Sigmoid colon (tissue), 7 donors: ENCODE measurements at regions of chr14 and their contacts with region 1.

Region 1: GRCh38 chr14:104795788-104796686 is 489 bp upstream of the AKT1 start:
- DNase-seq: no peak
- H3K4me3 ChIP-seq: peak overlapping the region; percentile 38 to 94 (median 59)
- H3K27ac ChIP-seq: peak overlapping the region; percentile 94 to 100 (median 98)
- H3K4me1 ChIP-seq: peaks cover 0 to 54% (median 48%) of the 10 kb centered on the region in 4 donors
- H3K27me3 ChIP-seq: no peaks in the 10 kb centered on the region
- CTCF ChIP-seq: no peak
- EP300 ChIP-seq: no peak
- POLR2A ChIP-seq: peak; percentile 34 to 37

Region 2: GRCh38 chr14:103401223-103402214 is 1394.5 kb before region 1 on chr14:
- intact Hi-C with region 1: no loop called
- DNase-seq: no peak
- H3K4me3 ChIP-seq: no peak overlapping the region
- H3K27ac ChIP-seq: no peak overlapping the region
- H3K4me1 ChIP-seq: peaks cover 0 to 69% (median 58%) of the 10 kb centered on the region in 4 donors
- H3K27me3 ChIP-seq: no peaks in the 10 kb centered on the region
- CTCF ChIP-seq: no peak
- EP300 ChIP-seq: no peak
- POLR2A ChIP-seq: no peak

Region 3: DNA sequence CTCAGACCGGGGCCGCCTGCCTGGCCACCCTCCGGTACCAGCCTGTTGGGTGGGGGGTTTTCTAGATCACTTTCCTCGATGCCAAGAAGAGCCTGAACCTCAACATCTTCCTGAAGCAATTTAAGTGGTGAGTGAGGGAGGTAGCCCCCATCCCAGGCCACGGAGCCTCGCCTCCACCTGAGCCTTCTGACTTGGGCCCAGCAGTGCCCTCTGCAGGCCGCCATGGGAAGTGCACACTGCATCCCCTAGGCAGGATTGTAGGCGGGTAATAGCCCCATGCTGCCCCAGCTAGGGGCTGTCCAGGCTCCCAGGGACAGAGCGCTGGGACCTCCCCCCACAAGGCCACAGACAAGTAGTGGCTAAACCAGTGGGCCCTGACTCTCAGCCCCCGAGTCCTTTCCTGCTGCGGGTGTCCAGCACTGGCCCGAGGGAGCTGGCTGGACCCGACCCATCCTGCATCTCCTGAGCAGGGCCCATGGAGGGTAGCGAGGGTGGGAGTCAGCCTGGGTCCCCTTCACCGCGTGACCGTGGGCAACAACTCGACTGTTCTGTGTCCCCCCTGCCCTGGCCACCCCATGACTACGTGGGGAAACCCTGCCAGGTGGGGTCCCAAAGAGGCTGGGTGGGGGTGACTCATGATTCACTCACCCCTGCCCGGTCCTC is 87.3 kb before region 1 on chr14:
- intact Hi-C with region 1: no loop called
- DNase-seq: no peak
- H3K4me3 ChIP-seq: no peak overlapping the region
- H3K27ac ChIP-seq: no peak overlapping the region
- H3K4me1 ChIP-seq: peaks cover 0 to 22% (median 12%) of the 10 kb centered on the region in 4 donors
- H3K27me3 ChIP-seq: no peaks in the 10 kb centered on the region
- CTCF ChIP-seq: peak; percentile 94 to 99 (median 98)
- EP300 ChIP-seq: no peak
- POLR2A ChIP-seq: no peak

Region 4: DNA sequence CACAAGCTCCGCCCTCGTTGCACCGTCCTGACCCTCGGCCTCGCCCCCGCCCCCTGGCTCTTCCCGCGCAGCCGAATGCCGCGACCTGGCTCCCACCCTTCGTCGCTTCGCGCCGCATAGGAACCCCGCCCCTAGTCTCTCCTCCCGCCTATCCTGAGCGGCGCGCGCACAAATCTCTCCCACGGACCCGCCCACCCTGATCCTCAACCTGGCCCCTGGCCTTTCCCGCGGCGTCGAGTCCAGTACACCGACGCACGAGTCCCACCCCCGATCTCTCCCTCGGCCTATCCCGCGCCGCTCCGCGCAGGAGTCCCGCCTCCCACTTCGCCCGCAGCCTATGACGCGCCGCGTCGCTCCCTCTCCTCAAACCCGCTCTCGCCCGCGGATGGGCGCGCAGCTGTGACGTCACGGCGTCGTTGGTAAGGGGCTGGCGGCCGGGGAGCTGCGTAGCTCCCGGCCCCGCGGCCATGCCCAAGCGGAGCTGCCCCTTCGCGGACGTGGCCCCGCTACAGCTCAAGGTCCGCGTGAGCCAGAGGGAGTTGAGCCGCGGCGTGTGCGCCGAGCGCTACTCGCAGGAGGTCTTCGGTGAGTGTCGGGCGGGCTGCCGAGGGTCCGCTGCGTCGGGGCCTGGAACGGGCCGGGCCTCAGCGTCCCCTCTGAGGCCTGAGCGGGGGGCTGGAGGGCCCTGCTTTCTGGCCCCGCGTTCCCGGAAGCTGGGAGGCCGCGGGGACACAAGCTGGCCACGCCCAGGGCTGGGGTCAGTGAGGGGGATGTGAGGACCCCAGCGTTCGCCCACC is 43.1 kb before region 1 on chr14 and contains the start of gene SIVA1:
- intact Hi-C with region 1: loop called (anchors 2 kb)
- DNase-seq: peak; percentile 100
- H3K4me3 ChIP-seq: peak within 1 kb of the TSS; percentile 65 to 99 (median 92)
- H3K27ac ChIP-seq: peak within 1 kb of the TSS; percentile 82 to 90 (median 86)
- H3K4me1 ChIP-seq: peaks cover 2 to 35% (median 30%) of the 10 kb centered on the region in 4 donors
- H3K27me3 ChIP-seq: no peaks in the 10 kb centered on the region
- CTCF ChIP-seq: no peak
- EP300 ChIP-seq: no peak
- POLR2A ChIP-seq: peak; percentile 74 to 86
- total RNA-seq, gene SIVA1: 235 to 512 (median 367) TPM

Region 5: GRCh38 chr14:105020815-105021655 is 225.0 kb after region 1 on chr14 and contains the start of gene CDCA4:
- intact Hi-C with region 1: no loop called
- DNase-seq: peak; percentile 98
- H3K4me3 ChIP-seq: peak within 1 kb of the TSS; percentile 69 to 96 (median 86)
- H3K27ac ChIP-seq: peak within 1 kb of the TSS; percentile 82 to 88 (median 86)
- H3K4me1 ChIP-seq: peaks cover 0 to 37% (median 33%) of the 10 kb centered on the region in 4 donors
- H3K27me3 ChIP-seq: no peaks in the 10 kb centered on the region
- CTCF ChIP-seq: no peak
- EP300 ChIP-seq: peak in 1 of 4 donors; percentile 50
- POLR2A ChIP-seq: peak; percentile 80 to 84
- total RNA-seq, gene CDCA4: 5.0 to 7.6 (median 5.6) TPM